ENCODE measurements at regions of chr5 and their contacts with region 1.

Region 1: DNA sequence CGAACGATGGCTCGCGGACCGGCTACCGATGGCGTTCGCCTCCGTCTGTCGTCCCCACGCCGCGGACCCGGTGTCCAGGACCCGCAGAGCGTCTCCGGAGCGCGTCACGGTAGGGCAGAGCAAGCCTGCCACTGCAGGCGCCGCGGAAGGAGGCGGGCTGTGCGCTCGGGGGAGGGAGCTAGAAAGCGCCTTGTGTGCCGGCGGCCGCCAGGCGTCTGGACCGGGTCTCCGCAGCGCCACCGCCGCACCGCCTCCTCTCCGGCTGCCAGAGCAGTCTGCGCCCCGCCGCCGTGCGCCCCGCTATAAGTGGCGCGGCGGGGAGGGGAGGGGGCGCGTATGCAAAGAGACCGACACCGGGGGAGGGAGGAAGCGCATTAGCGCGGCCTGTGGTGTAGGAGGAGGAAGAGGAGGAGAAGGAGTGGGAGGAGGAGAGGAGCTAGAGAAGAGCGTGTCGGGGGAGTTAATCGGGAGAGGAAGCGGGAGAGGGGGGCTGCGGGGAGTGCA is at the start of gene ENC1:
- DNase-seq: peak; percentile 87
- ATAC-seq: peak; percentile 53
- H3K4me3 ChIP-seq: peak within 1 kb of the TSS; percentile 91
- H3K27ac ChIP-seq: peak within 1 kb of the TSS; percentile 69
- H3K4me1 ChIP-seq: peaks cover 57% of the 10 kb centered on the region
- H3K27me3 ChIP-seq: no peaks in the 10 kb centered on the region
- CTCF ChIP-seq: peak; percentile 46
- total RNA-seq, gene ENC1: 24.5 TPM in 2 replicates

Region 2: GRCh38 chr5:74056789-74057164 is 583.7 kb before region 1 on chr5:
- CTCF ChIA-PET with region 1: no interaction called
- POLR2A ChIA-PET with region 1: no interaction called
- intact Hi-C with region 1: loop called (anchors 1 kb)
- DNase-seq: peak; percentile 51
- ATAC-seq: peak; percentile 81
- H3K4me3 ChIP-seq: no peak overlapping the region
- H3K27ac ChIP-seq: no peak overlapping the region
- H3K4me1 ChIP-seq: peaks cover 4% of the 10 kb centered on the region; the same call in 1 of the 2 replicates
- H3K27me3 ChIP-seq: no peaks in the 10 kb centered on the region
- CTCF ChIP-seq: peak; percentile 64

Region 3: GRCh38 chr5:74167206-74167929 is 473.1 kb before region 1 on chr5:
- CTCF ChIA-PET with region 1: no interaction called
- POLR2A ChIA-PET with region 1: no interaction called
- intact Hi-C with region 1: loop called (anchors 2 kb)
- DNase-seq: peak; percentile 80
- ATAC-seq: peak; percentile 95
- H3K4me3 ChIP-seq: peak overlapping the region; percentile 45
- H3K27ac ChIP-seq: peak overlapping the region; percentile 94
- H3K4me1 ChIP-seq: peaks cover 26% of the 10 kb centered on the region
- H3K27me3 ChIP-seq: no peaks in the 10 kb centered on the region
- CTCF ChIP-seq: no peak

Region 4: GRCh38 chr5:74326571-74327338 is 313.7 kb before region 1 on chr5:
- CTCF ChIA-PET with region 1: no interaction called
- POLR2A ChIA-PET with region 1: no interaction called
- intact Hi-C with region 1: loop called (anchors 1 kb)
- DNase-seq: peak; percentile 92
- ATAC-seq: peak; percentile 74
- H3K4me3 ChIP-seq: no peak overlapping the region; the same call in 1 of the 2 replicates
- H3K27ac ChIP-seq: peak overlapping the region; percentile 70
- H3K4me1 ChIP-seq: peaks cover 27% of the 10 kb centered on the region
- H3K27me3 ChIP-seq: no peaks in the 10 kb centered on the region
- CTCF ChIP-seq: no peak

Region 5: DNA sequence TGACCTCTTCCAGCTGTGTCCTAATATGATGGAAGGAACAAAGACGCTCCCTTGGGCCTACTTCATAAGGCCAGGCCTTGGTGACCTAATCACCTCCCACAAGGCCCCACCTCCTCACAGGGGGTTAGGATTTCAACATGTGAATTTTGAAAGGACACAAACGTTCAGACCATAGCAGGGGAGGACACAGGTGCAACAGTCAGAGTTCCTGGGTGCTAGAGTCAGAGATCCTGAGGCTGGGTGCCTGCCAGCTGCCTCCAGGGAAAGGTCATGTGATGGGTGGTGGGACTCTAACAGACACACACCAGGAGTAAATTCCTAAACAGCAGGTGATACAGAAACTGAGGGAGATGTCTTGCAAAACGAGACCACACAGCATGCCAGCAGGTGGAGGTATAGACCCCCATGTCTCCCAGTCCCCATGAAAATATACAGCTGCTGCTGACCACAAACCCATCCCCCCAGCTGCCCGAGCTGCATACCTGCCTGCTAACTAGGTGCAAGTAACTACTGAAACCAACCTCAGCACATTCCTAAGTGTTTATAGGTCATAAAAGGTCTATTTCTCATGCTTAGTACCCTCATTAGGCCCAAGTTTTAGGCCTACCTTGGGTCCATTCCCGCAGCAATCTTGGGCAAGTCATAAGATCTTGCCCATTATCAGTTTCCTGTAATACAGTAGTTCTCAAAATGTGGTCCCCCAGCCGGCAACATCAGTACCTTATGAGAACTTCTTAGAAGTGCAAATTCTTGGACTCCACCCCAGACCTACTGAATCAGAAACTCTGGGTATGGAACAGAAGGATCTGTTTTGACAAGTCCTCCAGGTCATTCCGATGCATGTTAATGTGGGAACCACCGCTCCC is 245.4 kb before region 1 on chr5:
- CTCF ChIA-PET with region 1: no interaction called
- POLR2A ChIA-PET with region 1: no interaction called
- intact Hi-C with region 1: loop called (anchors 5 kb)
- DNase-seq: peak; percentile 17
- ATAC-seq: no peak
- H3K4me3 ChIP-seq: no peak overlapping the region
- H3K27ac ChIP-seq: no peak overlapping the region
- H3K4me1 ChIP-seq: peaks cover 12% of the 10 kb centered on the region
- H3K27me3 ChIP-seq: no peaks in the 10 kb centered on the region
- CTCF ChIP-seq: no peak

Region 6: GRCh38 chr5:74464512-74465209 is 175.8 kb before region 1 on chr5:
- CTCF ChIA-PET with region 1: interaction called, 11 read pairs
- POLR2A ChIA-PET with region 1: no interaction called
- intact Hi-C with region 1: no loop called
- DNase-seq: no peak
- ATAC-seq: no peak
- H3K4me3 ChIP-seq: no peak overlapping the region
- H3K27ac ChIP-seq: no peak overlapping the region
- H3K4me1 ChIP-seq: no peaks in the 10 kb centered on the region
- H3K27me3 ChIP-seq: no peaks in the 10 kb centered on the region
- CTCF ChIP-seq: no peak

Region 7: DNA sequence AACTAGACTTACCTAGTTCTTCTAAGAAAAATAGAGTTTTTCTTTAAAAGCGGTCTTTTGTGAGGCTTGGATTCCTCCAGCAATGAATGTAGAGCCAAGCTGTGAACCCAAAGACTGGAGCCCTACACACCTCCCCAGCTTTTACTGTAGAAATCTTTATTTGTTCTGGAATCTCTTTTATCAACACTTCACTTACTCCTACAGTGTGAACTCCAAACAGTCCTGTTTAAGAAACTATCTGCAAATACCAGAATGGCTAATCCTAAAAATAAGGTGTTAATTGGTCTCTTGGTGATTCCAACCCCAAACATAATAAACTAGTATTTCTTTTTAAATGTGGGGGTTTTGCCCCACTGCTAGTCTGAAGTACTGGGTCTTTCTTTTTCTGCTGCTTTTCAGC is 103.8 kb before region 1 on chr5:
- CTCF ChIA-PET with region 1: no interaction called
- POLR2A ChIA-PET with region 1: no interaction called
- intact Hi-C with region 1: no loop called
- DNase-seq: no peak
- ATAC-seq: no peak
- H3K4me3 ChIP-seq: no peak overlapping the region
- H3K27ac ChIP-seq: no peak overlapping the region
- H3K4me1 ChIP-seq: peaks cover 13% of the 10 kb centered on the region
- H3K27me3 ChIP-seq: no peaks in the 10 kb centered on the region
- CTCF ChIP-seq: no peak

Region 8: GRCh38 chr5:74575732-74576538 is 64.6 kb before region 1 on chr5:
- CTCF ChIA-PET with region 1: no interaction called
- POLR2A ChIA-PET with region 1: no interaction called
- intact Hi-C with region 1: loop called (anchors 2 kb)
- DNase-seq: peak; percentile 86
- ATAC-seq: peak; percentile 95
- H3K4me3 ChIP-seq: no peak overlapping the region
- H3K27ac ChIP-seq: peak overlapping the region; percentile 42
- H3K4me1 ChIP-seq: peaks cover 22% of the 10 kb centered on the region
- H3K27me3 ChIP-seq: no peaks in the 10 kb centered on the region
- CTCF ChIP-seq: no peak